ENCODE measurements at regions of chr22 and their contacts with region 1.

Region 1: GRCh38 chr22:18024276-18024947 is at the start of gene MICAL3:
- DNase-seq: peak; percentile 35 to 46
- ATAC-seq: peak; percentile 54 to 56
- H3K4me3 ChIP-seq: peak within 1 kb of the TSS; percentile 66 to 96 (median 76)
- H3K27ac ChIP-seq: peak within 1 kb of the TSS; percentile 89 to 95 (median 94)
- H3K4me1 ChIP-seq: peaks cover 30 to 45% of the 10 kb centered on the region in 2 donors
- H3K27me3 ChIP-seq: no peaks in the 10 kb centered on the region
- CTCF ChIP-seq: peak; percentile 54 to 80 (median 67)
- POLR2A ChIP-seq: peak; percentile 83 to 85
- total RNA-seq, gene MICAL3: 6.0 to 9.8 (median 8.1) TPM

Region 2: DNA sequence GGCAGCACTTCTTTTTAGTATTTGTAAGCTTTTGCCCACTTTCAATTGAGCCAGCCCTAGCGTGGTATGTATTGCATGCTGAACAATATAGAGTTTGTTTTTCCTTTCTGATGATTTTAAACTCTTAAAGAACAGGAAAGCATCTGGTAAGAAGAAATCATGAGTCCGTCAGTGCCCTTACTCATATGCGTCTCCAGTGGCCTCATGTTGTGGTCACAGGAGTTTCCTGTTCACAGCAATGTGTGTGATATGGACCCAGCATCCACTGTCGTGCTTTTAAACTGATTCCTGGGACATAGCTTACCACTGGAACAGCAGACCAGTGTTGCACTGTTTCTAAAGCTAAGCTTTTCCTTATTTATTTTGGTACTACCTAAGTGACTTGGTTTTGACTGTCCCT is 290.2 kb before region 1 on chr22:
- in situ Hi-C with region 1: no loop called
- intact Hi-C with region 1: no loop called
- DNase-seq: no peak
- ATAC-seq: no peak
- H3K4me3 ChIP-seq: no peak overlapping the region
- H3K27ac ChIP-seq: peak overlapping the region in 1 of 4 donors; percentile 2
- H3K4me1 ChIP-seq: no peaks in the 10 kb centered on the region
- H3K27me3 ChIP-seq: no peaks in the 10 kb centered on the region
- CTCF ChIP-seq: no peak
- POLR2A ChIP-seq: no peak

Region 3: GRCh38 chr22:17792299-17792698 is 232.1 kb before region 1 on chr22:
- in situ Hi-C with region 1: no loop called
- intact Hi-C with region 1: no loop called
- DNase-seq: no peak
- ATAC-seq: no peak
- H3K4me3 ChIP-seq: no peak overlapping the region
- H3K27ac ChIP-seq: no peak overlapping the region
- H3K4me1 ChIP-seq: peaks cover 5 to 10% of the 10 kb centered on the region in 2 donors
- H3K27me3 ChIP-seq: no peaks in the 10 kb centered on the region
- CTCF ChIP-seq: no peak
- POLR2A ChIP-seq: no peak

Region 4: DNA sequence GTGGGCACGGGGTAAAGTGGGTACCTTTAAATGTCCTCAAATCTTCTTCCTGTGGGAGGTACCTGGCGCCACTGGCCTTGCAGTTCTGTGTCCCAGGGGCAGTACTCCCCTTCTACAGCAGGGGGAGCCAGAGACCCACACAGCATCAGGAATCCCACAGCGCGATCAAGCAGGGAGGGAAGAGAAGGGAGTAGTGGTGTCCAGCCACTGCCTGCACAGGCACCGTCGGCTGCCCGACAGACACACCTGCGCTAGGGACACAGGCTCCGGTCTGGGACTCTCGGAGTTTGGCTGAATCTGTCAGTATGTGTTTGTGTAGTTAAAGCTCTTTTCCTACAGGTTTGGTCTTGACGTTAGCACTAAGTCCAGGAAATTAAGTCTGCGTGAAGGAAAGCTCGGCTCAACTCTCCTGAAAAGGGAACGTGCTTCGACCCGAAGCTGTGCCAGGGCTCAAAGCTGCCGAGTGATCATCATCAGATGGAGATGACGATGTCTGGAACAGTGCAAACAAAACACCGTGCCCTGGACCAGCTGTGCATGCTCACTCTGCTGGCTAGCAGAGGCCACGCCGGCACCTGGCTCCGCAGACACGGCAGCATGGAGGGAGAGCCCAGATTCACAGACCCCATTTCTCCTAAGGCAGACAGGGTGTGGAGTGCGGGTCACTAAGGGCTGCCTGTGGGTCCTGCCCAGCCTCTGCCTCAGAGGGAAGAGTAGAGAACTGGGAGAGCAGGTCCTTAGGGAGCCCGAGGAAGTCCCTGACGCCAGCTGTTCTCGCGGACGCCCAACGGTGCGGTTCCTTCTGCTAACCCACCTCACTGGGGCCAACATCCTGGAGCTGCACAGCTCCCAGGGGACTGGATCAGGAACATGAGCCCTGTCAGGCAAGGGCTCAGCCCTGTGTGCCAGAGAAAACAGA is 194.1 kb before region 1 on chr22:
- in situ Hi-C with region 1: loop called in 1 of 4 experiments (anchors 10 kb)
- intact Hi-C with region 1: loop called (anchors 2 kb)
- DNase-seq: peak; percentile 75 to 87
- ATAC-seq: peak; percentile 83 to 88
- H3K4me3 ChIP-seq: no peak overlapping the region
- H3K27ac ChIP-seq: peak overlapping the region; percentile 57 to 88 (median 68)
- H3K4me1 ChIP-seq: peaks cover 39 to 48% of the 10 kb centered on the region in 2 donors
- H3K27me3 ChIP-seq: no peaks in the 10 kb centered on the region
- CTCF ChIP-seq: peak; percentile 99 to 100 (median 100)
- POLR2A ChIP-seq: no peak

Region 5: DNA sequence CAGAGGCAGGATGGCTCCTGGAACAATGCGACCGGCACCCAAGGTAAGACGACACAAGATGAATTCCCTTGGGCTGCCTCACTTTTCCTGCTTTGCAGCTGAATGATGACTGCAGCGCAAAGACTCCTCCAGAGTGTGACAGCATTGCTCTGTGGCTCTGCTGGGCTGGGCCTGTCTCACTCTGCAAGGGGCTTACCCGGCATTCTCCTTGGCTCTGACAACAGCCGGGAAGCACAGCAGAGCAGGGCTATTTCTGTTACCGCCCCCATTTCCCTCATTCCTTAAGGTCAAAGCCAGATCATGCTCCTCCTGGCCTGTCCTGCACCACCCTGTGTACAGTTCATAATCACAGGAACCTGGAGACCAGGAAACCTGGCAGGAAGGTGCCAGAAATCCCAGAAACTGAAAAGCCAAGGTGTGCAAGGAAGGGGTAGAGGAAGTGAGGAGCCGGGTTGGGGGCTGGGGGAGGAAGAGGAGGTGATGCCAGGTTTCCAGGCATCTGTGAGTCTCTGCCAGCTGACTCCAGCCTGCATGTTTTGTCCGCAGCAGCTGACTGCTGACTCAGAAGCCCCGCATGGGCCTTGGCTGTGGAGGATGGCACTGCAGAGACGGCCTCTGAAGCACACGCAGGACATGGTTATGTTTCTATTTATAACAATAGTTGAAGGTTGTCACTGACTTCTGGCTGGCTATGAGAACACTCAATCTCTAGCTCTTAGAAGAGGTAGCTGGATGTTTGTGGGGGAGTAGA is 113.7 kb before region 1 on chr22:
- in situ Hi-C with region 1: loop called in 1 of 4 experiments (anchors 5 kb)
- intact Hi-C with region 1: loop called (anchors 1 kb)
- DNase-seq: peak; percentile 94
- ATAC-seq: peak; percentile 76 to 80
- H3K4me3 ChIP-seq: peak overlapping the region in 3 of 4 donors; percentile 6 to 31 (median 10)
- H3K27ac ChIP-seq: peak overlapping the region; percentile 89 to 97 (median 94)
- H3K4me1 ChIP-seq: peaks cover 75 to 84% of the 10 kb centered on the region in 2 donors
- H3K27me3 ChIP-seq: no peaks in the 10 kb centered on the region
- CTCF ChIP-seq: peak in 4 of 5 experiments; percentile 8 to 54 (median 33)
- POLR2A ChIP-seq: peak; percentile 43 to 75

Region 6: DNA sequence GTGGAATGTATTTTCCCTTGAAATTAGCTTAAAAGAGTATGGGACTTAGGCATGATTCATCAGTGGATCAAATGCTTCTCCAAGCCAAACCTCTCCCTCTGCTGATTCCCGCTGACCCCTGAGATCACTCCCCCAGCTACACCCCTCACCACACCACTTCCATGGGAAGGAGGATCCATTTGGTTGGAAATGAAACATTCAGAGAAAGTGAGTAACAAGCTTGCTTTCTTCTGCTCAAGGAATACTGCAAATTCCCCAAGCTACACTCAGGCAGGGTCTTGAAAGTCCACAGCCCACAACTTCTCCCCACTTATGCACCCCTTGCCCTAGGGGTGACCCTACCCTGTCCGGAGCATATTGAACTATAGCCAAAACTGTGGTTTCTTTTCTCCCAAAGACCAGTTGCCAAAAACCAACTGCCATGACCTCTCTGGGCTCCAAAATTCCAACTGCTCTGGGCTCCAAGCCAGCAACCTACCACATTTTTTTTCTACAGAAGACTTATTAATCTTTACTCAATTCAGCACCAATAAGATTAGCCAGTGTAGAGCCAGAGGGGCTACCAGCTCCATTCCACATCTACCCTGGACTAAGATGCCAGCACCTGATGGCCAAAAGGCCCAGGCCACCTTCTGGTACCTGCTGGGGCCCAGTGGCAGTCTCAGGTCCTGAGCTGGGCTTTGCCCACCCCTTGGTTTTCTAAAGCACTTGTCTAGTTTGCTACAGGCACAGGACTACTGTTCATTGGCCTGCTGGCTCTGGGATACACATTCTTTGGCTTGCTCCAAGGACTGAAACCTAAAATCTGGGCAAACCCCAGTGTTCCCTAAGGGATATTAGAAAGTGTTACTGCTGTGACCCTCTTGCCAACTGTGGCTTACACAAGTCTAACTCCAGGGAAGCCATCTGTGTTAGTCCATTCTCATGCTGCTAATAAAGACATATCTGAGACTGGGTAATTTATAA is 101.2 kb before region 1 on chr22:
- in situ Hi-C with region 1: no loop called
- intact Hi-C with region 1: no loop called
- DNase-seq: no peak
- ATAC-seq: no peak
- H3K4me3 ChIP-seq: no peak overlapping the region
- H3K27ac ChIP-seq: peak overlapping the region in 3 of 4 donors; percentile 9 to 30 (median 11)
- H3K4me1 ChIP-seq: peaks cover 64 to 73% of the 10 kb centered on the region in 2 donors
- H3K27me3 ChIP-seq: no peaks in the 10 kb centered on the region
- CTCF ChIP-seq: no peak
- POLR2A ChIP-seq: no peak

Region 7: DNA sequence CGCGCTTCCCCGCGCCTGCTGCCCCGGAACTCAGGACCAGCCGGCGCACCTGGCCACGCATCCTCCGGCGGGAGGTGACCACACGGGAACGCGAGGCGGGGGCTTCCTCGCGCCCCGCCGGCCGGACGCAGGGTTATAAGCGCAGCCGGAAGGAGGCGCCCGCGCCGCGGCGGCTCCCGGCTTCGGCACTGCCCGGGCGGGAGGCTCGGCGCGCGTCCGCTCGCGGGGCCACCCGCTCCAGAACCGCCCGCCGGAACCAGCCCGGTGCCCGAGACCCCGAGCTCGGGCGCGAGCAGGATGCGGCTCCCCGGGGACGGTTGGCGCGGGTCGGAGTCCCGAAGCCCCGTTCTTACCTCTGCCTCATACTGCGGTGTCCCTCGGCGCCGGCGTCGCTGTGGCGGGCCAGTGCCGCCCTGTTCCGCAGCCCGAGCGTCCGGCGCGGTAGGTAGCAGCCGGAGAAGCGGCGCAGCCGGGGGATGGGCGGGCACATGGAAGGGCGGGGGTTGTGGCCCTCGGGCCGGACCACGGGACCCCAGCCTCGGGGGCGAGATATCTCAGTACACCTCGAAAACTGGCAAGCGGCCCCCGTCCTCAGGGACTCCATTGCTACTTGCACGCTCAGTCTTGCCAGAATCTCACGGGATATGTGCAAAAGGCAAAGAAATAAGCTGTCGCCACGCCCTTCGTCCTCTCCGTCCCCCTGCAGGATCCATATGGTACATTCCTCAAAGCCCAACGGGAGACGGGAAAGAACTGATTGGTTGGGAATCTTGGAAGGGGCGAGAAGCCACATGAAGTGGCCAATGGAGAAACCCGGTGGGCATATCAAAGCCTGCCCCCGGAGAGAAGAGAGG is 23.1 kb before region 1 on chr22:
- in situ Hi-C with region 1: no loop called
- intact Hi-C with region 1: loop called (anchors 1 kb)
- DNase-seq: peak; percentile 84 to 92
- ATAC-seq: peak; percentile 95 to 96
- H3K4me3 ChIP-seq: peak overlapping the region; percentile 62 to 89 (median 76)
- H3K27ac ChIP-seq: peak overlapping the region; percentile 85 to 95 (median 92)
- H3K4me1 ChIP-seq: peaks cover 15 to 24% of the 10 kb centered on the region in 2 donors
- H3K27me3 ChIP-seq: no peaks in the 10 kb centered on the region
- CTCF ChIP-seq: peak; percentile 46 to 82 (median 79)
- POLR2A ChIP-seq: peak; percentile 84 to 89

Region 8: DNA sequence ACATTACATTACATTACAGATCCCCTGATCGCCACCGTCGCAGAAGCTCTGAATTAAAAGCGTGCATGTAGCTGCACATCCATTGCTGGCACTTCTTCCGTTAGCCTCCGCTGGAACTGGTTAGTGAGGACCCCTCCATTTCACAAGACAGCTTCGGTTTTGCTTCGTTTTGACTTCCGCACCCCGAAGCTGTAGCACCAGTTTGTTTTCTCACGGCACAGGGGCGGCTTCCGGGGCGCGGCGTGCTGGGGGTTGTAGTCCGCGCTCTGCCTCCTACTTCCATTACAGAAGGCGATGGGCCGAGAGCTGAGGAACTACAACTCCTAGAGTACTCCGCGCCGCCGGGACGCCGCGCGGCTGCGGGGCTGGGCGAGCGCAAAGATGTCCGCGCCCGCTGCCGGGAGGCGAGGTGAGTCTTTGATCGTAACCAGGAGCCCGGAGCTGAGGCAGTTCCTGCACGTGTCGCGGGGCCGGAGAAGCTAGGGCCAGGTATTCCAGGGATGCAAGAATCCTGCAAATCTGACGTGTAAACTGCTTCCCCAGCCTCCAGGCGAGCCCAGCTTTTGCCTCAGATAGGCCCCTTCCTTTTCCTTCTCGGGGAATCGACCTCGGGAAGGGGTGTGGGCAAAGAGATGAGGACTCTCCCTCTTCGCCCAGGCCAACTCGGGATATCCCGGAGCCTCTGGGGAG is 53.4 kb after region 1 on chr22 and contains the start of gene PEX26:
- in situ Hi-C with region 1: no loop called
- intact Hi-C with region 1: loop called (anchors 2 kb)
- DNase-seq: peak; percentile 95 to 96
- ATAC-seq: peak; percentile 89 to 90
- H3K4me3 ChIP-seq: peak within 1 kb of the TSS; percentile 72 to 98 (median 86)
- H3K27ac ChIP-seq: peak within 1 kb of the TSS; percentile 82 to 92 (median 90)
- H3K4me1 ChIP-seq: peaks cover 26 to 36% of the 10 kb centered on the region in 2 donors
- H3K27me3 ChIP-seq: no peaks in the 10 kb centered on the region
- CTCF ChIP-seq: no peak
- POLR2A ChIP-seq: peak; percentile 87 to 88
- total RNA-seq, gene PEX26: 16.4 to 24.7 (median 16.8) TPM